ENCODE measurements at regions of chr5 and their contacts with region 1.

Region 1: GRCh38 chr5:135880278-135880677 is 15.4 kb downstream of the IL9 start:
- DNase-seq: no peak
- H3K4me3 ChIP-seq: no peak overlapping the region
- H3K27ac ChIP-seq: no peak overlapping the region
- H3K4me1 ChIP-seq: no peaks in the 10 kb centered on the region
- H3K27me3 ChIP-seq: no peaks in the 10 kb centered on the region
- CTCF ChIP-seq: no peak
- POLR2A ChIP-seq: no peak

Region 2: DNA sequence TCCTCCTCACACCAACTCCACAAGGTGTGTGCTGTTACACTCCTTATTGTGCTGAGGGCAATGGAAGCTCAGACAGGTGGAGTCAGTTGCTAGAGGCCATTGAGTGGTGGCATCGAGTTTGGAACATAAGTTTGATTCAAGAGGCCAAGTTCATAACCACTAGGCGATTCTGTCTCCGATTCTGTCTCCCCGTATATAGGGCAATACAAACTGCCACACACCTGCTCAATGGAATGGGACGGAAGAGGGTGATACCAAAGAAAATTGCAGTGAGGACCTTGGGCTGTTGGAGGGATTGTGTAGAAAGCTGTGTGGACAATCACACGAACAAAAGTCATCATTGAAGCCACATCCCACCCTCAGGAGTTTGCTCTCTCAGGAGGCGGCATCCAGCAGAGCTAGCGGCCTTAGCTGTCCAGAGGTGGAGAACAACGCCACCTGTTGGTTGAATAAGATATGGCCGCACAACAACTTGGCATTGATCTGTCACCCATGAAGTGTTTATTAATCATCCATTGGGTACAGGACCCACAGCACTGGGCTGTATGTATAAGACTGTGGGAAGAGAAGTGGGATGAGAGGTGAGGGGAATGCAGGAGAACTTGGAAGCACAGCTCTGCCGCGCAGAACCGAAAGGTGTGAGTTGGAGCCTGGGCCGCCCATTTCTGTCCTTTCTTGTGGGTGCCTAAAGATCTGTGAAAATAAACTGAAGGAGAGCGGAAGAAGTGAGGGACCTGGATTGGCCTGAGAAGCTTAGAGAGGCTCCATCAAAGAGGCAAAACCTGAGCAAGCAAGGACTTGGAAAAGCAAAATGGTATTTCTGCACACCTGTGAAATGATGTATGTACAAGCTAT is 328.5 kb before region 1 on chr5:
- intact Hi-C with region 1: no loop called
- DNase-seq: peak; percentile 75
- H3K4me3 ChIP-seq: no peak overlapping the region
- H3K27ac ChIP-seq: no peak overlapping the region
- H3K4me1 ChIP-seq: no peaks in the 10 kb centered on the region
- H3K27me3 ChIP-seq: peaks cover 3% of the 10 kb centered on the region
- CTCF ChIP-seq: peak; percentile 46 to 93 (median 83)
- POLR2A ChIP-seq: no peak

Region 3: GRCh38 chr5:136062366-136063274 is 182.3 kb after region 1 on chr5:
- intact Hi-C with region 1: loop called (anchors 5 kb)
- DNase-seq: no peak
- H3K4me3 ChIP-seq: no peak overlapping the region
- H3K27ac ChIP-seq: no peak overlapping the region
- H3K4me1 ChIP-seq: no peaks in the 10 kb centered on the region
- H3K27me3 ChIP-seq: no peaks in the 10 kb centered on the region
- CTCF ChIP-seq: peak in 2 of 4 experiments; percentile 41 to 62
- POLR2A ChIP-seq: no peak

Measured in prostate gland (tissue), 2 donors.